ENCODE measurements at regions of chr2 and their contacts with region 1.

Region 1: GRCh38 chr2:121400201-121400600 is 115.2 kb upstream of the TFCP2L1 start:
- DNase-seq: no peak
- H3K4me3 ChIP-seq: no peak overlapping the region
- H3K27ac ChIP-seq: no peak overlapping the region
- H3K4me1 ChIP-seq: no peaks in the 10 kb centered on the region
- H3K27me3 ChIP-seq: no peaks in the 10 kb centered on the region
- CTCF ChIP-seq: no peak
- EP300 ChIP-seq: no peak
- POLR2A ChIP-seq: no peak

Region 2: DNA sequence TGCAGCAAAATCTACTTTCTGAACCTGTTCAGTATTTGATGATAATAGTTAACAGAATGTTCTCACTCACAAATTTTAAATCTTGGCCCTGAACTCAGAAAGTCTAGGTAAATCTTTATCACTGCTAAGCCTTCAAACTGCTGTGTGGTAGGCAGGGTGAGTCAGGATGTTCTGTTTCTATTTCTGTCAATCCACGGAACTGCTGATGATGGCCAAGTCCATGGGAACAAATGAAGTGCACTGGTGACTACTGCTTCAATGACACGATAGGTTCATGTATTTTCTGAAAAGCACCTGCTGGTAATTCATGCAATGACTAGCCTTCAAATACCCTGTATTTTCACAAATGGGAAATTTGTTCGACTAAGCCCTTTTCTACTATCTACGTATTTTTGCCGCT is 322.3 kb after region 1 on chr2:
- intact Hi-C with region 1: loop called (anchors 2 kb)
- DNase-seq: no peak
- H3K4me3 ChIP-seq: no peak overlapping the region
- H3K27ac ChIP-seq: no peak overlapping the region
- H3K4me1 ChIP-seq: no peaks in the 10 kb centered on the region
- H3K27me3 ChIP-seq: no peaks in the 10 kb centered on the region
- CTCF ChIP-seq: no peak
- EP300 ChIP-seq: no peak
- POLR2A ChIP-seq: no peak

Measured in sigmoid colon (tissue), 7 donors.